ENCODE measurements at regions of chr15 and their contacts with region 1.

Region 1: DNA sequence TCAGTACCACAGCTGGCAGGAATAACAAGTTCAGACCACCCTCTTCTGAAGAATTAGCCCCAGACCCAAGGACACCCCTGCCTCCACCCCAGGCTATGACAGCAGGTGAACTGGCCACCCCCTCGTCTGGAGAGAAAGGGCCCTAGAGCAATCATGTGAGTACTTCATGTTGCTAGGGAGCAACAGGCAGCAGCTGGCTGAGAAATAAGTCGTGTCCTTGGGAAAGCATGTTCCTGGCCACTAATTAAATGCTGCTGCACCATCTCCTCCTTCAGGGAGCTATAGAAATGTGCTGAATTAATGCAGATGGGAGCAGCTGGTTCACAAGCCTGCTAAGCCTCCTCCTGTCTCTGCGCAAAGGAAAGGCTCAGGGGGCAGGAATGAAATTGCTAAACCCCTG is 31.5 kb downstream of the MRPS11 start:
- DNase-seq: no peak

Region 2: DNA sequence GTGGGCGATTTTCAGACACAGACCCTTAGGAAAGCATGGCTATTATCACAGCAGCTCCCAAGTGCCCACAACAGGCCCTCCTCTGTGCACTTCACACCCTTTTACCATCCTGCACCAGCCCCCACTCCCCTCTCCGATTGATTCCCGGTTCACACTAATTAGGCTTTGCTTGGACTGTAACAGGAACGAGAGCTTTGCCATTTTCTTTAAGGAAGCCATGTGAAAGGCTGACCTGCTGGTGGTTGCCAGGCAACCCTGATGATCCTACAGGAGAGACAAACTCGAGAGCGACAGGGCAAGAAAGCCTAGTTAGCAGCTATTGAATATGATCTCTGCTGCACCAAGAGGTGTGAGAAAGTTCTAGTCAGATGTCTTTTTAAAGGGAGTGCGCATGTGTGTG is 75.7 kb after region 1 on chr15:
- intact Hi-C with region 1: loop called (anchors 5 kb)
- DNase-seq: no peak

Measured in cardiac septum (tissue), 1 donor.